Lower lobe of right lung (tissue), 2 donors: ENCODE measurements at regions of chr6 and their contacts with region 1.

Region 1: GRCh38 chr6:149834513-149835481 is 29.4 kb downstream of the LRP11 start:
- DNase-seq: no peak
- ATAC-seq: peak; percentile 70 to 72
- H3K4me3 ChIP-seq: no peak overlapping the region
- H3K27ac ChIP-seq: no peak overlapping the region
- H3K4me1 ChIP-seq: no peaks in the 10 kb centered on the region
- H3K27me3 ChIP-seq: no peaks in the 10 kb centered on the region
- CTCF ChIP-seq: peak; percentile 92

Region 2: DNA sequence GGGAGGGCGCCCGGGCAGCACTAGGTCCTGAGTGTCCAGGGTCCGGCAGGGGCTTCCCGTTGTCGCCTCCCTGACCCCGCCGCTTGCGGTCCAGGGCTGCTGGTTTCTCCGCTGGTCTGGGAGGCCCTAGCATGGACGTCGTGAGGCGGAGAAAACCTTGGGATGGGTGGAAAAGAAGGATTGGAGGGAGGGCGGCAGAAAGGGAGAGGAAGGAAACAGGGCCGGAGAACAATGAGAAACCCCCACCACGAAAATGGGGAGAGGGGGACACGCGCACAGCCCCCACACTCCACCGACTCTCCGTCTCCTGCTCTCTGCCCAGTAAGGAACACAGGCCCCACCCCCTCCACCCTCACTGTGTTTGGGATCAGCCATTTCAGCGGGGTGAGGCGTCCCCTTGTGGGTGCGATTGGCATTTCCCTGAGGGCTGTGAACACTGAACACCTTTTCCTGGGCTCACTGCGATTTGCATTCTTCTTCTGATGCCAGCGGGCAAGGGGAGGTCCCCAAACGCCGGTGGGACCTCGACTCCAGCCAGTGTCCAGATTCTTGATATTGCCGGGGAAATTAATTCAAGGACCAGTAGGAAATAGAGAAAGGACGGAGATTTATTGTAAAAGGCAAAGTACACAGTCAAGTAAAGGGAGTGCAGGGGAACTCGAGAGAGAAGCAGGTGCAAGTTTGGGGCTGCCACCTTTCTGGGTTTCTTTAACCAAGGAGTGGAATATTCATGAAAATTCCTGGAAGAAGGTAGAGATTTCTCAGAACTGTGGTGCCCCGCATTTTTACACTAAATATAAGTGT is 91.4 kb after region 1 on chr6:
- intact Hi-C with region 1: loop called (anchors 10 kb)
- DNase-seq: peak; percentile 90
- ATAC-seq: peak; percentile 93 to 94
- H3K4me3 ChIP-seq: peak overlapping the region; percentile 61
- H3K27ac ChIP-seq: peak overlapping the region; percentile 71
- H3K4me1 ChIP-seq: peaks cover 22% of the 10 kb centered on the region
- H3K27me3 ChIP-seq: peaks cover 25% of the 10 kb centered on the region
- CTCF ChIP-seq: peak; percentile 82

Region 3: GRCh38 chr6:150016324-150017185 is 181.8 kb after region 1 on chr6:
- intact Hi-C with region 1: no loop called
- DNase-seq: no peak
- ATAC-seq: peak; percentile 78 to 86
- H3K4me3 ChIP-seq: no peak overlapping the region
- H3K27ac ChIP-seq: no peak overlapping the region
- H3K4me1 ChIP-seq: no peaks in the 10 kb centered on the region
- H3K27me3 ChIP-seq: peaks cover 63% of the 10 kb centered on the region
- CTCF ChIP-seq: peak; percentile 76